Activated T-helper 2 cell treated with anti-CD3 and anti-CD28 coated beads, Interferon-gamma antibody, Interleukin-2, Interleukin-4, amounts not matched to agents 10 μg/mL and 5 μg/mL and 100 μg/mL, durations not matched to agents 14 hours and 24 hours and 36 hours (primary cell): ENCODE measurements at regions of chr1 and their contacts with region 1.

Region 1: DNA sequence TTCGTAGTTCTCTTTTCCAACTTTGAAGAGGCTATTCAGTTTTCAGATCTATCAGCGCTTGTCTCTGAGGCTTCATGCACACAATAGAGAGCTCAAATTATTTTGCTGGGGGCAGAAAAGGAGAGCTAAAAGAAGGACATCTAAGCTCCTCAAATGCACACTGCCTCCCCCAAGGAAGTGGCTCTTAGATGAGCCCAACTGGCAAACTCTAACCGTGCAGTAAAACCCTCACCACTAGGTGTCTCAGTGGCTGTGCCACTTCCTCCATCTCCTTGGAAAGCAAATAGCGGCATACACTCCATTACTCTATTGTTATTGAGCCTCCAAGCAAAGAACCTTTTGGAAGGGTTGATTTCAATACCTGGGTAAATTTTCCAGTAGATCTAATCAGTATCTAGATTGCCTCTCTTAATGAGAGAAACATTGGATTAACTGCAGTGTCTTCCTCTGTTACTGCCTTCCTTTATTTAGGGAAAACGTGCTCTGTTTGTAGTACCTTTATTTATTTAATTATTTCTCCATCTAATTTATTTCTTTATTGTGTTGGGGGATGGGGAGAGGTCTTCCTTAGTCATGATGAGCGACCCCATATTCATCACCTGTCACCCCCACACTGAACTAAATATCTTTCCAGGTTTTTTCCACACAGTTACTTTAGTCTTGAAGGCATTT is 9.2 kb upstream of the SFPQ start:
- DNase-seq: peak; percentile 61
- H3K4me3 Mint-ChIP-seq: no peak overlapping the region
- H3K27ac Mint-ChIP-seq: no peak overlapping the region
- H3K4me1 Mint-ChIP-seq: peaks cover 3% of the 10 kb centered on the region
- H3K27me3 Mint-ChIP-seq: peaks cover 14% of the 10 kb centered on the region

Region 2: DNA sequence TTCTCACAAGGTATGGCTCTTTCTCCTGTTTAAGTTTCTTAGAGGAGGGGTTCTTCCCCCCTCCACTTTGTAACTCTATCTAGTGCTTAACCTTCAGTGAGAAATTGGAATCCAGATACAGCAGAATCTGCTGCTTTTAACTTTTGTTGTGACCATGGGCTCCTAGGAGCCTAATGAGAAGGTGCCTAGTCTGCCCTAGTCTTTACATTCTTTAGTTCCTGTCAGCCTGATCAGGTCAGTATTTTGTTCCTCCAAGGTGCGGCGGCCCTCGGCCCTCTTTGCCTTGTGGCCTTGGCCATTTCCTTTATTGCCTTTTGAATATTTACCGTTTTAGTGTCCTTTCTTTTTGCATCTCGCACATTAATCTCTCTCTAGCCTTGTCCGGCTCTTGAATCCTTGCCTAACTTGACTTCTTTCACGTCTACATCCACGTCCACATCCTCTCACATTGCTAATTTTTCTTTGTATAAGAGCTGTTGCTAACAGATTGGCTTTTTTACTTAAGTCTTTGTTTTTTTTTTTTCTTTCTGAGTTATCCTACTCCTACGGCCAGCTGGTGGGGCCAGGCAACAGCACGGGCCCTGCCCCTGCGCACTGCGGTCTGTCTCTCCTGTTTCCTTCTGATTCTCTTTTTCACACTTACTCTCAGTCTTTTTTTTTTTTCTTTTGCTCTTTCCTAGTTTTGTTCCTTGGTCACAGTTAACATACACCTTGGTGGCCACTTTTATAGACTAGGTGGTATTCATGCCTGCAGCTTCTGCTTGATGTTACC is 58.3 kb before region 1 on chr1:
- intact Hi-C with region 1: no loop called
- DNase-seq: no peak
- H3K4me3 Mint-ChIP-seq: no peak overlapping the region
- H3K27ac Mint-ChIP-seq: no peak overlapping the region
- H3K4me1 Mint-ChIP-seq: peaks cover 9% of the 10 kb centered on the region
- H3K27me3 Mint-ChIP-seq: no peaks in the 10 kb centered on the region

Region 3: DNA sequence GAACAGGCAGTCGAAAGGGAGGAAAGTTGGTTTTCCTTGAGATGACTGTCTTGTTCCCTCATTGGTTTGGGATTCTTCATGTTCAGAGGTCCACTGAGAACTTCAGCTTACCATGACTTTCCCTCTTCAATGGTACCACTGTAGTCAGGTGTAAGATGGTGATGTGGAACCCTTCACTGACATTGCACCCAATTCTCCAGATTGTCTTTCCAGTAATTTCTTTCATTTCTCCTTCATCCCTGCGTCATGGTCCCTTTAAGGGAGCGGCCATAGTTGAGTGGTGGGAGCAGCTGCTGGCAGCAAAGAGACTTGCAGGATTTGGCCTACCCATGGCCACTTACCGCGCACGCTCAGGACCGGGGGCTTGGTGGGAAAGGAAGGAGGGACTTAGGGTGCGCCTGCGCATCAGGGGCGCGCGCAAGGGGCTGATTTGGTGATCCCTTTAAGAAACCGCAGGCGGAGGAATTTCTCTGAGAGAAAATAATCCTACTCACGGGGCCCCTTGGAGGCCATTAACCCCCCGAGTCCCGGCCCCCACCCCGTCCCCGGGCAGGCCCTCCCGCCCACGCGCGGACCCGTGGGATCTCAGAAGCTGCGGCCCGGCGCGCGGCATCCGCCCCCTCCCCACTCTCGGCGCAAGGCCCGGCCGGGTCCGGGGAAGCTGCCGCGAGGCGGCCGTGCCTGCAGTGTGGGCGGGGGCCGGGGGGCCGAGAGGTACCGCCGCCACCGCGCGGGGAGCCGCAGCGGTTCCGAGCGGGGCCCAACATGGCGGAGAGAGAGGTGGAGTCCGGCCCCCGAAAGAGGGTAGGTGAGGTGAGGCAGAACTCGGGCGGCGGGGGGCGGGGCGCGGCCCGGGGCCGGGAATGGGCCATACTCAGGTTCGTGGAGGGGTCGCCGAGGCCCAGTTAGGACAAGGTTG is 66.4 kb after region 1 on chr1 and contains the start of gene ZMYM4:
- intact Hi-C with region 1: loop called (anchors 2 kb)
- DNase-seq: peak; percentile 87
- H3K4me3 Mint-ChIP-seq: peak within 1 kb of the TSS; percentile 81
- H3K27ac Mint-ChIP-seq: peak within 1 kb of the TSS; percentile 80
- H3K4me1 Mint-ChIP-seq: peaks cover 28% of the 10 kb centered on the region
- H3K27me3 Mint-ChIP-seq: peaks cover 7% of the 10 kb centered on the region
- total RNA-seq, gene ZMYM4: 31.9 and 35.1 TPM in 2 replicates

Region 4: GRCh38 chr1:35298464-35298863 is 96.3 kb after region 1 on chr1:
- intact Hi-C with region 1: loop called (anchors 1 kb)
- DNase-seq: no peak
- H3K4me3 Mint-ChIP-seq: no peak overlapping the region
- H3K27ac Mint-ChIP-seq: no peak overlapping the region
- H3K4me1 Mint-ChIP-seq: peaks cover 7% of the 10 kb centered on the region
- H3K27me3 Mint-ChIP-seq: no peaks in the 10 kb centered on the region